Esophagus muscularis mucosa (tissue), 4 donors: ENCODE measurements at regions of chr2 and their contacts with region 1.

Region 1: DNA sequence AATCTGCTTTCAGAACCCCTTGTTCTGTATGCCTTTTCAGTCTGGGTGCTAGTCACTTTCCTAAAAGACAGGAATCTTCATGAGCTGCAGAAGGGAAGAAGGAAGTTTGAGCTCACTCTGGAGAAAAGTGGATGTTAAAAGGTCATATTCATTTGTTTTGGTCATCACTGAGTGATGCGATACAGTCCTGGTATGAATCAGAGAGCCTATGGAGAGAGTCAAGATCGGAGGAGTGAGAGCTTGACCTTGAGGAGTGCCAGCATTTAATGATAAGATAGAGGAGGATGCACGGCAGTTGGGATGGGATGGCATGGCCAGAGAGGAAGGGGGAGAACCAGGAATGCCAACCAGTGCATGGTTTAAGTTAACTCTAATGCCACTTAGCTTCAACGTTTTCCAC is 19.6 kb downstream of the USP39 start:
- DNase-seq: no peak
- H3K4me3 ChIP-seq: no peak overlapping the region
- H3K27ac ChIP-seq: no peak overlapping the region
- H3K4me1 ChIP-seq: peaks cover 0 to 6% (median 1%) of the 10 kb centered on the region in 4 donors
- H3K27me3 ChIP-seq: no peaks in the 10 kb centered on the region
- CTCF ChIP-seq: no peak
- EP300 ChIP-seq: no peak
- POLR2A ChIP-seq: no peak

Region 2: DNA sequence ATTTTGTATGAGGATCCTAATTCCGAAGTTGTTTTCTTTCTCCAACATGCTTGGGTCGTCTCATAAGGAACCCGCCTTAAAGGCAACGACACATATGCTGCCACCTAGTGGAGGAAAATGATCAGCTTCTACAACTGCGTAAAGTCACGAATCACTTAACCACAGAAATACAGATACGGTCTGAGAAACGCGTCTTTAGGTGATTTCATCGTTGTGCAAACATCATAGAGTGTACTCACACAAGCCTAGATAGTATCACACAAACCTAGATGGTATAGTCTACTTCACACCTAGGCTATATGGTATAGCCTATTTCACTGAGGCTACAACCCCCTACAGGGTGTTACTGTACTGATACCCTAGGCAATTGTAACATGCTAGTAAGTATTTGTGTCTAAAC is 71.7 kb after region 1 on chr2:
- intact Hi-C with region 1: loop called (anchors 5 kb)
- DNase-seq: no peak
- H3K4me3 ChIP-seq: no peak overlapping the region
- H3K27ac ChIP-seq: peak overlapping the region; percentile 30 to 72 (median 70)
- H3K4me1 ChIP-seq: peaks cover 42 to 71% (median 60%) of the 10 kb centered on the region in 4 donors
- H3K27me3 ChIP-seq: peaks cover 0 to 3% (median 0%) of the 10 kb centered on the region in 4 donors
- CTCF ChIP-seq: peak; percentile 77 to 88 (median 85)
- EP300 ChIP-seq: no peak
- POLR2A ChIP-seq: no peak

Region 3: DNA sequence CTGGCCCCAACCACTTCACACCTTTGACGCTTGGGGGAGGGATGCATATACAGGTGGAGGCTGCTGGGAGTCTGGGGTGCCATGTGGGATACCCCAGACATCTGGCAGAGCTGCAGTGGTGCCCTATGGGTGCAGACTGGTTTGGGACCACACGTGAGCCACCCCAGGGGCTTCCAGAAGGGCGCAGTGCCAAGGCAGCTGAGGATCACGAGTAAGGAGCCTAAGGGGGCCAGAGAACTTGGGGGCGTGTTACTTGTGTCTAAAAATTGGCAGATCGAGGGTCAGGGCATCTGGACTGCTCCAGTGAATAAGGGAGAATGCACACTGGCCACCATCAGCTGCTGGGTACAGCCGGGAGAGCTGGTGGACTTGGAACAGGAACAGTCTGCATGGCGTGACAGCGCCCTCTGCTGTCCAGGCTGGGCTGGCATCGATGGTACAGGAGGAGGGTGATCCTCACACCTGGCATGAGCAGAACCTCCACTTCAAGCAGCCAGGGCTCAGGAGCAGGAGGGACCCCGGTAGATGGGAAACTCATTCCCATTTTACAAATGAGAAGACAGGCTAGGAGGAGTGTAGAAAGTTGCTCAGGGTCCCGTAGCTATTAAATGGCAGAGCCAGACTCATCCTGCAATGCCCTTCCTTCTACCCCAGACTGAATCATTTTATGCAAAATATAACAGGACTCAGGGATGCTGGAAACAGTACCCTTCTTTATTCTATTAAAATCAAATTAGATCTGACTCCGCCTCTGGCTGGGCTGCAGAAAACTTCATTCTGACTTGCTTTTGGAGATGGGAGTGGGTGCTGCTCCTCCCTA is 178.6 kb after region 1 on chr2:
- intact Hi-C with region 1: loop called (anchors 5 kb)
- DNase-seq: peak; percentile 97
- H3K4me3 ChIP-seq: no peak overlapping the region
- H3K27ac ChIP-seq: no peak overlapping the region
- H3K4me1 ChIP-seq: peaks cover 15 to 23% (median 17%) of the 10 kb centered on the region in 4 donors
- H3K27me3 ChIP-seq: no peaks in the 10 kb centered on the region
- CTCF ChIP-seq: peak; percentile 91 to 92 (median 91)
- EP300 ChIP-seq: no peak
- POLR2A ChIP-seq: no peak